H1 (cell line): ENCODE measurements at regions of chr21 and their contacts with region 1.

Region 1: DNA sequence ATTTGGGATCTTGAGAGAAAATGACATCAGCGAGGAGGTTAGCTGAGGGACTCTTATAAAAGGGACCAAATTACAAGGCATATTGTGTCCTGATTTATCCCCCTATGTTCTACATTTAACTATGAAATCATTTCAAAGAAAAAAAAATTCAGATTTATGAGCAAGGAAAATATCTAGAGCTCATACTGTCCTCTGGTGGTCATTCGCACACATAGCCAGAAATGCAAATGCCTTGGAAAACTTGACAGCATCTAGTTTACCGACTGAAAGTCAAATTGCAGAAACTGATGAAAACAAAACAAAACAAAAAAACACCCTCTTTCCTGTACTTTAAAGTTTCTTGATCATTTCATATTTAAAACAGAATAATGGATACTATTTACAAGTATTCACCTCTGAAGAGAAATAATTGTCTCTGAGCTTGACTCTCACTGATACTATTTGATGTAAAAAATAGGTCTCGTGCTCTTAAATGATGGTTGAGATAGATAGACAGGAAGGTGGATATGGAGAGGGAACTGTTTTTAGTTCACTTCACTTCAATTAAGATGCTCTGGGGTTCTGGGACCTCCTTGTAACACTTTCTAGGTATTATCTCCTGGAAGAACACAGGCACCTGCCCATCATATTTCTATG is 253.8 kb downstream of the PCP4 start:
- DNase-seq: no peak
- H3K4me3 ChIP-seq: no peak overlapping the region
- H3K27ac ChIP-seq: no peak overlapping the region
- H3K4me1 ChIP-seq: no peaks in the 10 kb centered on the region
- H3K27me3 ChIP-seq: no peaks in the 10 kb centered on the region
- CTCF ChIP-seq: peak in 2 of 3 experiments; percentile 83 to 84; a peak in 3 of 4 replicates
- EP300 ChIP-seq: no peak
- POLR2A ChIP-seq: no peak
- RAD21 ChIP-seq: peak; percentile 91 to 93

Region 2: GRCh38 chr21:39788383-39788782 is 332.7 kb before region 1 on chr21:
- CTCF ChIA-PET with region 1: interaction called, 34 read pairs
- POLR2A ChIA-PET with region 1: no interaction called
- DNase-seq: peak; percentile 34 to 65
- H3K4me3 ChIP-seq: no peak overlapping the region
- H3K27ac ChIP-seq: no peak overlapping the region
- H3K4me1 ChIP-seq: no peaks in the 10 kb centered on the region
- H3K27me3 ChIP-seq: no peaks in the 10 kb centered on the region
- CTCF ChIP-seq: peak; percentile 69 to 97 (median 94)
- EP300 ChIP-seq: no peak
- POLR2A ChIP-seq: no peak
- RAD21 ChIP-seq: peak; percentile 91 to 96

Region 3: DNA sequence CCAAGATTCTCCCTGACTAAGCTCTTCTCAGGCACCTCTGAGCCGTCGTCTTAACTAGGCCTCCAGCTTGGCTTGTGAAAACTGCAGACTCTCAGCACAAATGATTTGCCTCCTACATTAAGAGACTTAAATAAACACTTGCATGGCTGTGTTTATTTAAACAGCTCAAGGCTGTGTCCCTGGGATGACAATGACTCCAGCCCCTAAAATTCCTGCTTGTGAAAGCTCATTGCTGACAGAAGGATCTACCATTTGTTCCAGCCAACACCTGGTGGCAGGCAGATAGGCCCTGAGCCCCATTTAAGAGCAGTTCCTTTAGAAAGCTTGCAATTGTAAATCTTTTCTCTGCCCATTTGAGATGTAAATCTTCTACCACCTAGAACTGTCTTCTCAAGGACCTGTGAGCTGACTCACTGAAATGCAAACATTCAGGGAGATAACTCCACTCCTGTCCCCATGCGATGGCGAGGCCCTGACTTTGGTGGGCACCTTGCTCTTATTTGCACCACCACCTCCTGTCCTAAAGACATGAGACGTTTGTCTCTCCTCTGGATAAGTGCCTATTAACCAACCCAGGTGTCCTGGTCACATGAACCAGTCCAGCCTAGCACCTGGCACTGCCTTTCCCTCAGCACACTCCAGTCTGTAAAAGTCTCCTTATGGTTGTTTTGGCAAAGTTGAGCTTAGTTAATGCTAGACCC is 268.9 kb before region 1 on chr21:
- CTCF ChIA-PET with region 1: interaction called, 10 read pairs
- POLR2A ChIA-PET with region 1: no interaction called
- DNase-seq: no peak
- H3K4me3 ChIP-seq: no peak overlapping the region
- H3K27ac ChIP-seq: no peak overlapping the region
- H3K4me1 ChIP-seq: 0 out of 7 replicates have a peak, but pooled peaks cover 0 to 4% (median 0%) of the 10 kb centered on the region in 4 experiments
- H3K27me3 ChIP-seq: no peaks in the 10 kb centered on the region
- CTCF ChIP-seq: no peak
- EP300 ChIP-seq: no peak
- POLR2A ChIP-seq: no peak
- RAD21 ChIP-seq: no peak

Region 4: GRCh38 chr21:39867198-39867650 is 253.8 kb before region 1 on chr21 and contains the start of gene PCP4:
- CTCF ChIA-PET with region 1: interaction called, 116 read pairs
- POLR2A ChIA-PET with region 1: no interaction called
- DNase-seq: peak; percentile 78 to 93
- H3K4me3 ChIP-seq: no peak within 1 kb of the TSS; a peak in 2 of 8 replicates
- H3K27ac ChIP-seq: no peak within 1 kb of the TSS
- H3K4me1 ChIP-seq: peaks cover 0 to 5% (median 1%) of the 10 kb centered on the region in 4 experiments; a peak in 4 of 7 replicates
- H3K27me3 ChIP-seq: no peaks in the 10 kb centered on the region
- CTCF ChIP-seq: peak; percentile 87 to 97 (median 87)
- EP300 ChIP-seq: no peak
- POLR2A ChIP-seq: no peak
- RAD21 ChIP-seq: peak; percentile 92 to 93
- total RNA-seq, gene PCP4: 1.8 and 2.3 TPM in 2 replicates

Region 5: DNA sequence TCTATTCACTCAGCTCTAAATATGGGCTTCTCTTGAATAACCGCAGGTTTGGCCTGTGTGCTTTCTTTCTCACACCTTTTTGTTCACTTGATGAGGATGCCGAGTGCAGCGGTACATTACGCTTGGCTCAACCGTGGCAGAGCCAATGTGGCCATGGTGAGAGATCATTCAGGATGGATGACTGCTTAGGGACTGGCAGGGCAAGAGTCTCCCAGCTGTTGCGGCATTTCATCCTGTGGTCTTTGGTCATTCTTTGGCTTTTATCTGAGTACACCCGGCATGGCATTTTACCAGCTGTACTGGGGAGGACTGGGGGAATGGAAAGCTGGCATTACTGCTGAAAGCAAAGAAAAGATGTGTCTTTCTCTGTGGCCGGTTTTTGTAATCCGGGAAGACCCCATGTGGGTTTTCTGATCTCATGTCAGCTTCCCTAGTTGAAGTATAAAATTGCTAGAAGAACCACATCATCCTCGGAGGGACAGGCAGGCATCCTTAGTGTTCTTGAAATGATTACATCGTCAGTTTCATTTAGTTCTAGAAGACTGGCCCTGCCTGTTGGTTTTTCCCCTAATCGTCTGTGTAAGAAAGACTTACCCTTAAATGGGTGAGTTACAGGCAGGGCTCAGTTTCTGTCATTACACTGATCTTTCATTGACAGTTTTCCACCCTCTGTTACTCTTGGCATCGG is 238.8 kb before region 1 on chr21:
- CTCF ChIA-PET with region 1: interaction called, 14 read pairs
- POLR2A ChIA-PET with region 1: no interaction called
- DNase-seq: no peak
- H3K4me3 ChIP-seq: no peak overlapping the region
- H3K27ac ChIP-seq: no peak overlapping the region
- H3K4me1 ChIP-seq: peaks cover 0 to 4% (median 0%) of the 10 kb centered on the region in 4 experiments; a peak in 1 of 7 replicates
- H3K27me3 ChIP-seq: no peaks in the 10 kb centered on the region
- CTCF ChIP-seq: no peak
- EP300 ChIP-seq: no peak
- POLR2A ChIP-seq: no peak
- RAD21 ChIP-seq: no peak

Region 6: GRCh38 chr21:39911286-39912199 is 209.5 kb before region 1 on chr21:
- CTCF ChIA-PET with region 1: interaction called, 22 read pairs
- POLR2A ChIA-PET with region 1: no interaction called
- DNase-seq: no peak
- H3K4me3 ChIP-seq: no peak overlapping the region
- H3K27ac ChIP-seq: no peak overlapping the region
- H3K4me1 ChIP-seq: peaks cover 0 to 4% (median under 1%) of the 10 kb centered on the region in 4 experiments; a peak in 2 of 7 replicates
- H3K27me3 ChIP-seq: no peaks in the 10 kb centered on the region
- CTCF ChIP-seq: peak; percentile 20 to 47 (median 40)
- EP300 ChIP-seq: no peak
- POLR2A ChIP-seq: no peak
- RAD21 ChIP-seq: peak; percentile 52 to 65

Region 7: GRCh38 chr21:40080385-40080784 is 40.7 kb before region 1 on chr21:
- CTCF ChIA-PET with region 1: no interaction called
- POLR2A ChIA-PET with region 1: no interaction called
- DNase-seq: no peak
- H3K4me3 ChIP-seq: no peak overlapping the region
- H3K27ac ChIP-seq: no peak overlapping the region
- H3K4me1 ChIP-seq: no peaks in the 10 kb centered on the region
- H3K27me3 ChIP-seq: no peaks in the 10 kb centered on the region
- CTCF ChIP-seq: no peak
- EP300 ChIP-seq: no peak
- POLR2A ChIP-seq: no peak
- RAD21 ChIP-seq: no peak

Region 8: DNA sequence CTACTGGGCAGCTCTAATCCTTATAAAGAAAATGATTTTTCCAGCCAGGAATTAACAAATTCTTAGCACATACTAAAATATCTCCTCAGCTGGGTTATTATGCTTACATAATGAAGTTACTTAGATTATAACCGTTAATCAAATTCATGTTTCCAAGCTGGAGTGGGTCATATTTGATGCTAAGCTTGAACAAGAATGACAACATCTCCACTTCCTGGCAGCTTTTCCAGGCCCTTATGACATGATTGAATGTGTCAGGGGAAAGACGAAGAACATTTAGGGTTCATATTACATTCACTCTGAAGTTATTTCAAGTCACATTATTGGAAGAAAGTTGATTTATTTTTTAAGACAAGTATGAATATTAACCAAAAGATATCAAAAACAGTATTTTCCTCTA is 79.9 kb after region 1 on chr21:
- CTCF ChIA-PET with region 1: no interaction called
- POLR2A ChIA-PET with region 1: no interaction called
- DNase-seq: no peak
- H3K4me3 ChIP-seq: no peak overlapping the region
- H3K27ac ChIP-seq: no peak overlapping the region
- H3K4me1 ChIP-seq: no peaks in the 10 kb centered on the region
- H3K27me3 ChIP-seq: no peaks in the 10 kb centered on the region
- CTCF ChIP-seq: no peak
- EP300 ChIP-seq: no peak
- POLR2A ChIP-seq: no peak
- RAD21 ChIP-seq: no peak